ENCODE measurements at regions of chr19 and their contacts with region 1.

Region 1: DNA sequence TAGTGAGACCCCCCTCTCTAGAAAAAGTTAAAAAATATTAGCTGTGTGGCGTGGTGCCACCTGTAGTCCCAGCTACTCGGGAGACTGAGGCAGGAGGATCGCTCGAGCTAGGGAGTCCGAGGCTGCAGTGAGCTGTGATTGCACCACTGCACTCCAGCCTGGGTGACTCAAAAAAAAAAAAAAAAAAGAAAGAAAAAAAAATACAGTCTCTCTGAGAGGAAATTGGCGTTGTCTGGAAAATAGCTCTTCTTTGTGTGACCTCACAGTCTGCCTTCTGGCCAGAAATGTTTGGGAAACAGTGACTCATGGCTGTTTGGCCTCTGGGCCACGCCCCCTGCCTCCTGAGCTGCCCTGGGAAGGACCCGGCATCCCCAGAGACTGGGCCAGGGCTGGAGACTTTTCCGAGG is 10.7 kb downstream of the MARCHF2 start:
- DNase-seq: peak; percentile 91 to 94
- ATAC-seq: peak; percentile 86 to 96 (median 93)
- H3K4me3 ChIP-seq: peak overlapping the region; percentile 42
- H3K27ac ChIP-seq: peak overlapping the region; percentile 82
- H3K4me1 ChIP-seq: peaks cover 8% of the 10 kb centered on the region
- H3K27me3 ChIP-seq: no peaks in the 10 kb centered on the region
- CTCF ChIP-seq: no peak

Region 2: DNA sequence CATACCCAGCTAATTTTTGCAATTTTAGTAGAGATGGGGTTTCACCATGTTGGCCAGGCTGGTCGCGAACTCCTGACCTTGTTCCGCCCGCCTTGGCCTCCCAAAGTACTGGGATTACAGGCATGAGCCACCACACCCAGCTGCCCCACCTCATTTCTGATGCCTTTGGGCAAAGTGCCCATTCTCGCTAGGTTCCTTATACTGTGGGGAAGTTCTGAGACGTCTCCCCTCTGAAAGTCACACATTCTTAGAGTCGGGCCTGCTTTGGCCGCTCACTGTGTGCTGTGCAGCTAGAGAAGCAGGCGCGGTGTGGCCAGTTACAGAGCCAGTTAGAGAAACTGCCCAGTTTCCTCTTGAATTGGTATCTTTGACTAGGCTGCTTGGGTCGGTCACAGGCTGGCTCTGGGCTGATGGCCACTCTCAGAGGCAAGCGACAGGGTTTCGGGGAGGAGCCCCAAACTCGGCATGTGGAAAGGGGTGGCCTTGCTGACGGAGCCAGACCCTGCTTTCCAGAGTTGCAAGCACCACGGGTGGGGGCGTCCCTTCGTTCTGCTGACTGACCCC is 60.6 kb after region 1 on chr19:
- intact Hi-C with region 1: loop called in 1 of 2 experiments (anchors 2 kb)
- DNase-seq: peak; percentile 52 to 62
- ATAC-seq: peak in 1 of 4 donors; percentile 15
- H3K4me3 ChIP-seq: no peak overlapping the region
- H3K27ac ChIP-seq: no peak overlapping the region
- H3K4me1 ChIP-seq: peaks cover 22% of the 10 kb centered on the region
- H3K27me3 ChIP-seq: no peaks in the 10 kb centered on the region
- CTCF ChIP-seq: no peak